ENCODE measurements at regions of chr16 and their contacts with region 1.

Region 1: GRCh38 chr16:58418601-58419000 is 26.3 kb downstream of the GINS3 start:
- DNase-seq: no peak

Region 2: GRCh38 chr16:58306327-58306726 is 112.3 kb before region 1 on chr16:
- intact Hi-C with region 1: no loop called
- DNase-seq: no peak

Region 3: DNA sequence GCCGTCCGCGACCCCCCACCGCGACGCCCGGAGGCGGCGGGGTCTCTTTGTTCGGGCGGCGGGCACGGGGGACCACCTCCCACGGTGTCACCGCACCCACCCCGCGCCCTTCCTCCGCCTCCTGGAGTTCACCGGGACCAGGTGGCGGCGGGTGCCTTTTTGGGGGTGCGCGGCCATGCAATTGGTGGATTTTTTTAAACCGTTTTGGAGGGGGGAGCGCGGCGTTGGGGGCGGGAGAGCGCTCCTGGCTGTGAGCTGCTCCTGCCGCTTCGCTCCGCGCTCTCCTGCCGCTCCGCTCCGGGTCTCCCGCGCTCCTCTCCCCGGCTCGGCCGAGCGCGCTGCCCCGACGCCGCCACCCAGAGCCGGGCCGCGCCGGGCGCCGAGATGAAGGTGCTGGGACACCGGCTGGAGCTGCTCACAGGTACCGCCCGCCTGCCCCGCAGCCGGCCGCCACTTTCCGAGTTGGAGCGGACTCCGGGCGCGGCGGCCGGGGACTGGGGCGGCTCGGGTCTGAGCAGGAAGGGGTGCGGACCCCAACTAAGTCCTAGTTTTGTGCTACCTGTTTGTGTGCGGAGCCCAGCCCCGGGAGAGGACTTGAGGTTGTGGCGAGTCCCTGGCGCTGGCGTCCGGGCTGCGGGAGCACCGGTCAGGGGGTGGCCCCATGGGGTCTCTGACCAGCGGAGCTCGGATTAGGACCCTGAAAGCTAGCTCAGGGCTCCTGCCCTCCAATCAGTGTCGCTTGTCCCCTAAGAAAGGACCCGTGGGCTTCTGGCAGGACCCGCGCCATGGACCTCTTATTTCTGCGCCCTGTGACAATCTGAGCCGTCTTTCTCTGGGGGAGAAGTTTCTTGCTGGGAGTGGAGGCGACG is 45.7 kb after region 1 on chr16:
- intact Hi-C with region 1: loop called (anchors 2 kb)
- DNase-seq: no peak

Region 4: GRCh38 chr16:58620396-58620795 is 201.8 kb after region 1 on chr16:
- intact Hi-C with region 1: no loop called
- DNase-seq: no peak

Measured in cardiac septum (tissue), 1 donor.